ENCODE measurements at regions of chr4 and their contacts with region 1.

Region 1: DNA sequence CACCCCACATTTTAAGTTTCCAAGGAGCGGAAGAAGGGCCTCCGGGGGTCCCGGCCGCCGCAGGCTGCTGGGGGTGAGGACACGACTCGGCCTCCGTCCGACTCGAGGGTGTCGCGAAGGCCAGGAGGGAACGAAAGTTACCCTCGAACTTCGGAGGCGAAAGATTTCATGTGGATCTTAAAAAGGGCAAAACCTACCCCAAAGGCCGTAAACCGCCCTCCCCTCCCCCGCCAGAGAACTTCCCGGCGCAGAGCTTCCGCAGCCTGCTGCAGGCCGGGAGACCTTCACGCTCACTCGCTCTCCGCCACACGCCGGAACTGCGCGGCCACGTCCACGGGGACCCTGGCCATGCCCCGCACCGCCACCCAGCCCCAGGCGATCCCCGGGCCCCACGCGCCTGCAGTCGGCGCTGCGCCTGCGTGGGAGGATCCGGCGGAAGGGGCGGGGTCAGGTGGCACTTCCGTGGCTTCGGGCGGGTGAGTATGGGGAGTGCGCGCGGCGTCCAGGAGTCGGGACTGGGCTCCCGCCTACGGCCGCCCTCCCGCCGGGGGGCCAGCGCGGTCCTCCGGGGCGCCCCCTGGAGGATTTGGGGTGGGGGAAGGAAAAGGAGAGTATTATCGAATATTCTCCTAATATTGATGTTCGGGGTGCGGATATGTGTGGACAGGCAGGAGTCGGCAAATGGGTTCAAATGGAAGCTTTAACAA is at the start of gene MMAA:
- DNase-seq: peak; percentile 97 to 99
- ATAC-seq: peak; percentile 100
- H3K4me3 ChIP-seq: peak within 1 kb of the TSS; percentile 95 to 96
- H3K27ac ChIP-seq: peak within 1 kb of the TSS; percentile 88 to 93
- H3K4me1 ChIP-seq: peaks cover 3 to 4% of the 10 kb centered on the region in 2 donors
- H3K27me3 ChIP-seq: no peaks in the 10 kb centered on the region
- total RNA-seq, gene MMAA: 8.8 to 10.2 TPM

Region 2: DNA sequence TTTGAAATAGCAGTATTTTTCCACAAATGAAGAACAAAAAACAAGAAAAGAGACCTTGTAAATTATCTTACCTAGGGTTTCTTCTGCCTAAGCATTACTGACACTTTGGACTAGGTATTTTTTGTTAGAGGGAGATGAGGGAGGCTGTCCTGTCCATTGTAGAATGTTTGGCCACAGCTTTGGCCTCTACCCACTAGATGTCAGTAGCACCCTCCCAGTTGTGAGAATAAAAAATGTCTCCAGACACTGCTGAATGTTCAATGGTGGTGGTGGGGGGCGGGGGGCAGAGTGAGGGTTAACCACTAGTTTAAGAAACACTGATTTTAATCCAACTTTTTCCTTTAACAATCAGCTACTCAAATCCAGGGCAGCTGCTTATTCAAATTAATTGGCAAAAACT is 464.5 kb before region 1 on chr4:
- intact Hi-C with region 1: loop called in 1 of 2 experiments (anchors 10 kb)
- DNase-seq: no peak
- ATAC-seq: no peak
- H3K4me3 ChIP-seq: no peak overlapping the region
- H3K27ac ChIP-seq: no peak overlapping the region
- H3K4me1 ChIP-seq: no peaks in the 10 kb centered on the region
- H3K27me3 ChIP-seq: no peaks in the 10 kb centered on the region

Region 3: DNA sequence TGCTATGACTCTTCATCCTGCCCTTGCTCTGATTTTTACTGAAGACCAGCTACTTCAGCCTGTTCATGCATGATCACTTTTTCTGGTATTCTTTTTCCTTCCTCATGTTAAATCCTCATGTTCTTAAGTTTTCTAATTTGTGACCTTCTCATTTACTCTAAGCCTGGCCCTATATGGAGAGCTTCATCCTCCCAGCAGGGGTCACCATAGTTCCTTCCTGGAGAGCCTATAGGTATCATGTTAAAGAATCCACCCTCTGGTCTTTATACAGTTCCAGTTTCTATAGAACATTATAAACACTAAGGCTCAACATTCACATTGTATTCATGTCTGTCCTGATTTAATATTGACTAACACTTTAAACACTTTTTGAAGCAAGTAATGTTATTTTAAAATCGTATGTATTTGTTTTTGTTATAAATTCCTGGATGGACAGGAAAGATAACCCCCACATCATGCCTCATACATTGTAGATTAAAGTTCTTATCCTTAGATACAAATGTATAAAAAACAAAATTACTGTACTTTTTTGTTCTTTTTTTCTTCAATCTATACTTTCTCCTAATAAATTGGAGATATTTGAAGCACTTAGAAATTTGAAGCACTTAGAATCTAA is 384.9 kb before region 1 on chr4:
- intact Hi-C with region 1: loop called in 1 of 2 experiments (anchors 10 kb)
- DNase-seq: no peak
- ATAC-seq: no peak
- H3K4me3 ChIP-seq: no peak overlapping the region
- H3K27ac ChIP-seq: no peak overlapping the region
- H3K4me1 ChIP-seq: peaks cover 0 to 2% of the 10 kb centered on the region in 2 donors
- H3K27me3 ChIP-seq: no peaks in the 10 kb centered on the region

Region 4: DNA sequence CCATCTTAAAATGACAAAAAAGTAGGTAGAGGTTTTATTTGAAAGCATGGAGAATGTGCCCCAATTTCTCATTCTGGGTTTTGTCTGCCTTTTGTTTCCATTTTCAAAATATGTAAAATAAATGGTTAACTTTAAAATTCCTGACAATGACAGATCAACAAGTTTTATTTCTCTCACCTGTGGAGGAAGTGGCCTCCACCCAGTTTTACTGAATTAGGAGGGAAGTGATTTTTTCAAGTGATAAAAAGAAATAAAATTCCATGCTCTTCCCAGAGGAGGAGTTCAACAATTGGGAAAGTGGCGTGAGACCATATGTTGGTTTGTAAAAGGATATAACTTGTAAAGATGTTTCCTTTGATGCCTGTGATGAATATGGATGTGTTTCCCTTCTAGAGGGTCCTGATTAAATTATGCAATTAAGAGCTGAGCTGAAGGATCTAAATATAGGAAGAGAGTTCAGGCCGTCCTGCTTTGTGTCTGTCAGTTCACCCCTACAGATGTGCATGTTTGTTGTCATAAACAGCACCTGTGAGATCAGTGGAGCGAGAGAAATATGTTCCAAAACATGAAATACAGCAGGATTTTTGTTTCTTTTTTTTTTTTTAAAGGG is 117.9 kb before region 1 on chr4:
- intact Hi-C with region 1: loop called in 1 of 2 experiments (anchors 10 kb)
- DNase-seq: no peak
- ATAC-seq: no peak
- H3K4me3 ChIP-seq: no peak overlapping the region
- H3K27ac ChIP-seq: no peak overlapping the region
- H3K4me1 ChIP-seq: peaks cover 0 to 13% of the 10 kb centered on the region in 2 donors
- H3K27me3 ChIP-seq: no peaks in the 10 kb centered on the region

Region 5: GRCh38 chr4:145663194-145663593 is 44.1 kb after region 1 on chr4:
- intact Hi-C with region 1: no loop called
- DNase-seq: no peak
- ATAC-seq: peak; percentile 77
- H3K4me3 ChIP-seq: no peak overlapping the region
- H3K27ac ChIP-seq: no peak overlapping the region
- H3K4me1 ChIP-seq: no peaks in the 10 kb centered on the region
- H3K27me3 ChIP-seq: no peaks in the 10 kb centered on the region

Region 6: GRCh38 chr4:145808021-145808650 is 189.1 kb after region 1 on chr4:
- intact Hi-C with region 1: loop called in 1 of 2 experiments (anchors 10 kb)
- DNase-seq: no peak
- ATAC-seq: peak; percentile 64
- H3K4me3 ChIP-seq: no peak overlapping the region
- H3K27ac ChIP-seq: no peak overlapping the region
- H3K4me1 ChIP-seq: peaks cover 0 to 5% of the 10 kb centered on the region in 2 donors
- H3K27me3 ChIP-seq: no peaks in the 10 kb centered on the region

Measured in aorta (tissue), 5 donors.